Natural killer cell (primary cell): ENCODE measurements at regions of chr11 and their contacts with region 1.

Region 1: DNA sequence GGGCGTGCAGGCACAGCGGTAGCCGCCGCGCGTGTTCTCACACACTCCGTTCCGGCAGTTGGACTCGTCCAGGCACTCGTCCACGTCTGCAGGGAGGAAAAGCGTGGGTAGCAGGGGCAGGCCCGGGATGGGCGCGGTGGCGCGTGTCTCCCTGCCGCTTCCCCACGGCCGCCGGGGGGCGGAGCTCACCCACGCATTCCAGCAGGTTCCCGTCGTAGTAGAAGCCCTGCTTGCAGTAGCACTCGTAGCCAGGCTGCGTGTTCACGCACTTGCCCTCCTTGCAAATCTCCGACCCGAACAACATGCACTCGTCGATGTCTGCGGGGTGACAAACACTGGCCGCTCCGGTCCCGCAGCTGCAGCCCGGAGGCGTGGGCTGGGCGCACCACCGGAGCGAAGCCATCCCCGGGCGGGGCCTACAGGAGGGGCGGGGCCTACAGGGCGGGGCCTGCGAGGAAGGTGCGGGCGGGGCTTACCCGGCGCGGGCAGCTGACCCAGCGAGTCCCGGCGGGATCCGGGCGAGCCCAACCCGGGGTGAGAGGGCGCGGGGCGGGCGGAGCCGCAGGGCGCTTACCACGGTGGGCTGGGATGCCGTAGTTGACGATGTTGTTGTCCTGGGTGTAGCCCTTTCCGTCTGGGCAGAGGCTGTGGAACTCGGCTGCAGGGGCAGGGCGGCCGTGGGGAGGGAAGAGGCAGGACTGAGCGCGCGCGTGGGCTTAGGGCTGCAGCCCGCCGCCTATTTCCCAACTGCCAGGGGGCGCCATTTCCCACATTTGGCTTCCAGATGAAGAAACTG is 15.6 kb downstream of the SCYL1 start:
- DNase-seq: peak; percentile 88 to 93
- ATAC-seq: peak; percentile 88 to 96 (median 90)
- H3K4me3 ChIP-seq: peak overlapping the region; percentile 71
- H3K4me3 Mint-ChIP-seq: peak overlapping the region; percentile 88
- H3K27ac ChIP-seq: peak overlapping the region; percentile 70
- H3K27ac Mint-ChIP-seq: peak overlapping the region; percentile 39 to 76
- H3K4me1 ChIP-seq: peaks cover 17% of the 10 kb centered on the region
- H3K4me1 Mint-ChIP-seq: peaks cover 7 to 40% of the 10 kb centered on the region in 2 donors
- H3K27me3 ChIP-seq: no peaks in the 10 kb centered on the region
- H3K27me3 Mint-ChIP-seq: no peaks in the 10 kb centered on the region
- CTCF ChIP-seq: peak; percentile 52

Region 2: GRCh38 chr11:65593518-65594298 is 53.2 kb after region 1 on chr11:
- intact Hi-C with region 1: loop called (anchors 1 kb)
- DNase-seq: peak; percentile 30 to 70
- ATAC-seq: peak; percentile 43 to 50 (median 48)
- H3K4me3 ChIP-seq: no peak overlapping the region
- H3K4me3 Mint-ChIP-seq: no peak overlapping the region
- H3K27ac ChIP-seq: no peak overlapping the region
- H3K27ac Mint-ChIP-seq: no peak overlapping the region
- H3K4me1 ChIP-seq: peaks cover 21% of the 10 kb centered on the region
- H3K4me1 Mint-ChIP-seq: peaks cover 3 to 16% of the 10 kb centered on the region in 2 donors
- H3K27me3 ChIP-seq: no peaks in the 10 kb centered on the region
- H3K27me3 Mint-ChIP-seq: no peaks in the 10 kb centered on the region
- CTCF ChIP-seq: peak; percentile 55